Calu3 (cell line): ENCODE measurements at regions of chr1 and their contacts with region 1.

Region 1: GRCh38 chr1:158124999-158125398 is 55.7 kb upstream of the CD1D start:
- DNase-seq: peak; percentile 85
- H3K4me3 Mint-ChIP-seq: no peak overlapping the region
- H3K27ac Mint-ChIP-seq: no peak overlapping the region
- H3K4me1 Mint-ChIP-seq: peaks cover 23% of the 10 kb centered on the region
- H3K27me3 Mint-ChIP-seq: peaks cover 46% of the 10 kb centered on the region
- CTCF ChIP-seq: peak; percentile 91

Region 2: GRCh38 chr1:157193702-157194391 is 931.2 kb before region 1 on chr1:
- CTCF ChIA-PET with region 1: no interaction called
- intact Hi-C with region 1: loop called (anchors 10 kb)
- DNase-seq: peak; percentile 91
- H3K4me3 Mint-ChIP-seq: no peak overlapping the region
- H3K27ac Mint-ChIP-seq: no peak overlapping the region
- H3K4me1 Mint-ChIP-seq: peaks cover 17% of the 10 kb centered on the region
- H3K27me3 Mint-ChIP-seq: peaks cover 45% of the 10 kb centered on the region
- CTCF ChIP-seq: peak; percentile 84

Region 3: DNA sequence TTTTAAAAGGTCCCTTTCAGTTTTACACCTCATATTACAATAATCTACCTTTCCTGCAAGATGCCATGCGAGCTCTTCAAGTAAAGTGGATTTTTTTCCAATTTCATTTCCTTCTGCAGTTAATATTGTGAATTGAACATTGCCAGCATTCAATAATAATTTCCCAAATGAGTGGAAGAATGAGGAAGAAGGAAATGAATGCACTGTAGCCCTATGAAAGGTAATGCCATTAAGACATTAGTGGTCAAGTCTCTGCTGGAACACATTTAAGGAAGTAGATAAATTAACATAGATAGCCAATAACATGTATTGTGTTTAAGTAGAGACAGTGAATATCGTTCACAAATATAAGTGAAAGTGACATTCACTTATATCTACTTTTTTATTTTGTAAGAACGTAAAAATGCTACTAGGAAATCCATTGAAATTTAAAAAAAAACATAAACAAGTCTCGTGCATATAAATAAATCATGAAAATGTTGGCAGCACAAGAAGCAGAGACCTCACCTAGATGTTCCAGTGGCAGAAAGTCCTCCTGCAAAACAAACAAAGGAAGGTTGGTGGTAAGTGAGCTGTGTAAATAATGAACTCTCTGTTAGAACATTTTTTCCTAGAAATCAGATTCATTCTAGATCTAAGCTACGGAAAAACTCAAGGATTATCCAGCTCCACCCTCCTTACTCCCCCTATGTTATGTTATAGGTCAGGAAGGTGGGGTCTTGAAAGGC is 442.1 kb before region 1 on chr1:
- CTCF ChIA-PET with region 1: no interaction called
- intact Hi-C with region 1: loop called (anchors 10 kb)
- DNase-seq: no peak
- H3K4me3 Mint-ChIP-seq: peak overlapping the region; percentile 97
- H3K27ac Mint-ChIP-seq: peak overlapping the region; percentile 99
- H3K4me1 Mint-ChIP-seq: peaks cover 84% of the 10 kb centered on the region
- H3K27me3 Mint-ChIP-seq: no peaks in the 10 kb centered on the region
- CTCF ChIP-seq: no peak

Region 4: GRCh38 chr1:157969697-157970485 is 155.1 kb before region 1 on chr1:
- CTCF ChIA-PET with region 1: interaction called, 175 read pairs
- intact Hi-C with region 1: loop called (anchors 1 kb)
- DNase-seq: peak; percentile 79
- H3K4me3 Mint-ChIP-seq: no peak overlapping the region
- H3K27ac Mint-ChIP-seq: peak overlapping the region; percentile 64
- H3K4me1 Mint-ChIP-seq: peaks cover 49% of the 10 kb centered on the region
- H3K27me3 Mint-ChIP-seq: no peaks in the 10 kb centered on the region
- CTCF ChIP-seq: peak; percentile 68

Region 5: GRCh38 chr1:158071138-158071537 is 53.9 kb before region 1 on chr1:
- CTCF ChIA-PET with region 1: no interaction called
- intact Hi-C with region 1: no loop called
- DNase-seq: no peak
- H3K4me3 Mint-ChIP-seq: no peak overlapping the region
- H3K27ac Mint-ChIP-seq: no peak overlapping the region
- H3K4me1 Mint-ChIP-seq: peaks cover 14% of the 10 kb centered on the region
- H3K27me3 Mint-ChIP-seq: no peaks in the 10 kb centered on the region
- CTCF ChIP-seq: no peak

Region 6: GRCh38 chr1:158203693-158204457 is 78.9 kb after region 1 on chr1:
- CTCF ChIA-PET with region 1: interaction called, 10 read pairs
- intact Hi-C with region 1: no loop called
- DNase-seq: peak; percentile 41
- H3K4me3 Mint-ChIP-seq: no peak overlapping the region
- H3K27ac Mint-ChIP-seq: no peak overlapping the region
- H3K4me1 Mint-ChIP-seq: peaks cover 22% of the 10 kb centered on the region
- H3K27me3 Mint-ChIP-seq: peaks cover 17% of the 10 kb centered on the region
- CTCF ChIP-seq: peak; percentile 64